HEK293T (cell line): ENCODE measurements at regions of chr10 and their contacts with region 1.

Region 1: DNA sequence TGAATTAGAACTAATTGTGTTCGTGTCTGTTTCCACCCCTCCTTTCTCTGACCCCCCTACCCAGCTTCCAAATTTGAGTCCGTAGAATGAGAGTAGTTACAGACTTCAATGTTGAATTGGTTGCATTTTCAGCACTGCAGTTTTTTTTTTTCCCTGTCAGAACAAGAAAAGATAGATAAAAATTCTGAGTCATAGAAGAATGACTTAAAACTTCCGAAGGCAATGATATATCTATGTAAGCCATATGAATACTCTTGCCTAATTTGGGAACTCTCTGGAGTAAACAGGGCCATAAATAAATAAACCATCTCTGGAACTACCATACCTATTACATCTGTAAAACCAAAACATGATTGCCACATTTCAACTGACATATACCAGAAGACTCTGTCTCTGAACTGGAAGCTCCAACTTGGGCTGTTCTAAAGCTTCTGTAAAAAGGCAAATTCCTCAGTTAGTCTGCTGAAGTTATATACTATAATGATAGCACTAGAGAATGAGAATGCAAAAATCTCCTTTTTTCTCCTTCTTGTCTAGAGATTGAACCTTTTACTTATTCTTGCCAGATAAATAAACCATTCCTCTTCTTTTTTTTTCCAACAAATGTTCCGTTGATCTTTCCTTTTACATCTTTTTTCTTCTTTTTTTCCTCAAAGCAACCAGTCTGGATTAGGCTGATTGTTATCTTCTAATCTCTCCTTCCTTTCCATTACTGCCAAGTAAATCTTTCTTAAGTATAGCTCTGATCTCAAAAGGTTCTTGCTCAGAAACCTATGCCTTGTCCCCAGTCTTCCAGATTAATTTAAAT is 23.5 kb downstream of the VCL start:
- DNase-seq: no peak

Region 2: DNA sequence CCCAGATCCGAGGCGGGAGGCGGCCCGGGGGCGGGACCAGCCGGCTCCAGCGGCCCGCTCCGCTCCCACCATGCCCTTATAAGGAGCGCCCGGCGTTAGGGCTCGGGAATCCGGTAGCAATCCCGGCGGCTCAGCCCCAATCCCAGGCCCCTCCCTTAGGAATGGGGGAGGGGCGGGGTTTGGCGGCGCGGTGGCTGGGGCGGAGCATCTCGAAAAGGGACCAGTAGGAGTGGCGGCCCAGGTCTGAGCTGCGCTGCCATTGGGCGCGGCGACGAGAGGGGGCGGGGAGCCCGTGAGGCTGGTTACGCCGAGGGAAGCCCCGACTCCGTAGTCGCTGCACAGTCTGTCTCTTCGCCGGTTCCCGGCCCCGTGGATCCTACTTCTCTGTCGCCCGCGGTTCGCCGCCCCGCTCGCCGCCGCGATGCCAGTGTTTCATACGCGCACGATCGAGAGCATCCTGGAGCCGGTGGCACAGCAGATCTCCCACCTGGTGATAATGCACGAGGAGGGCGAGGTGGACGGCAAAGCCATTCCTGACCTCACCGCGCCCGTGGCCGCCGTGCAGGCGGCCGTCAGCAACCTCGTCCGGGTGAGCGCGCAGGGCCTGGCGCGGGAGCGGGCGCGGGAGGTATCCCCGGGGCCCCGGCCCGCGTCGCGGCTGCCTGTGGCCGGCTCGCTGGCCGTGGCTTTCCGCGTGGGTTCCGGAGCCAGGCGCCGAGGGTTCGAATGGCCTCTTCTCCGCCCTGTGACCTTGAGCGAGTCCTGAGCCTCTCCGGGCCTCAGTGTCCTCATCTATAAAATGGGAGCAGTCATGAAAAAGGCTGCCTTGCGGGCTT is 23.4 kb before region 1 on chr10 and contains the start of gene VCL:
- CTCF ChIA-PET with region 1: interaction called, 3 read pairs
- POLR2A ChIA-PET with region 1: interaction called, 10 read pairs
- DNase-seq: peak; percentile 97